OCI-LY7 (cell line): ENCODE measurements at regions of chr7 and their contacts with region 1.

Region 1: DNA sequence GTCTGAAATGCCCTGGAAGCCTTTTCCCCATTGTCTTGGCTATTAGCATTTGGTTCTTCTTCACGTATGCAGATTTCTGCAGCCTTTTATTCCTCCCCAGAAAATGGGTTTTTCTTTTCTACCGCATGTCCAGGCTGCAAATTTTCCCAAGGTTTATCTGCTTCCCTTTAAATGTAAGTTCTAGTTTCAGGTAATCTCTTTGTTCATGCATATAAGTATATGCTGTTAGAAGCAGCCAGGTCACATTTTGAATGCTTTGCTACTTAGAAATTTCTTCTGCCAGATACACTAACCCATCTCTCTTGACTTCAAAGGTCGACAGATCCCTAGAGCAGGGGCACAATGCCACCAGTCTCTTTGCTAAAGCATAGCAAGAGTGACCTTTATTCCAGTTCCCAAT is 12.3 kb downstream of the THAP5 start:
- DNase-seq: no peak
- H3K4me3 ChIP-seq: no peak overlapping the region
- H3K27ac ChIP-seq: no peak overlapping the region
- H3K4me1 ChIP-seq: peaks cover 8% of the 10 kb centered on the region
- CTCF ChIP-seq: no peak

Region 2: DNA sequence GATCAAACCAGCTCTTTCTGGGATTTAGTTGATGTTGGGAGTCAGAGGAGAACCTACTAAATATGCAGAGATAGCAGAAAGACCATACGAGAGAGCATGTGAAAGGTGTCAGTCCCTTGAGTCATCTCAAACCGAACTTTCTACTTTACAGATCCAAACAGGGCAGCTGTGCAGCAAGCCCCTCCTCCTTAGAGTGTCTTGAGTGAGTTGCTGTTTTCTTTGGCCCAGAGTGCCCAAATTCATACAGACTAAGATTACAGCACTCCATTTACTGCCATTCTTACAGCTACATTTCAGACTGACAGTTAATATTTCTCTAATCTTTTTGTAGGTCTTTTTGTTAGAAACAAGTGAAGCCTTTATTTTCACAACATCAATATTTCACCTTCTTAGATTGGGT is 154.3 kb before region 1 on chr7:
- CTCF ChIA-PET with region 1: no interaction called
- POLR2A ChIA-PET with region 1: no interaction called
- intact Hi-C with region 1: no loop called
- DNase-seq: no peak
- H3K4me3 ChIP-seq: no peak overlapping the region
- H3K27ac ChIP-seq: no peak overlapping the region
- H3K4me1 ChIP-seq: no peaks in the 10 kb centered on the region
- CTCF ChIP-seq: no peak

Region 3: DNA sequence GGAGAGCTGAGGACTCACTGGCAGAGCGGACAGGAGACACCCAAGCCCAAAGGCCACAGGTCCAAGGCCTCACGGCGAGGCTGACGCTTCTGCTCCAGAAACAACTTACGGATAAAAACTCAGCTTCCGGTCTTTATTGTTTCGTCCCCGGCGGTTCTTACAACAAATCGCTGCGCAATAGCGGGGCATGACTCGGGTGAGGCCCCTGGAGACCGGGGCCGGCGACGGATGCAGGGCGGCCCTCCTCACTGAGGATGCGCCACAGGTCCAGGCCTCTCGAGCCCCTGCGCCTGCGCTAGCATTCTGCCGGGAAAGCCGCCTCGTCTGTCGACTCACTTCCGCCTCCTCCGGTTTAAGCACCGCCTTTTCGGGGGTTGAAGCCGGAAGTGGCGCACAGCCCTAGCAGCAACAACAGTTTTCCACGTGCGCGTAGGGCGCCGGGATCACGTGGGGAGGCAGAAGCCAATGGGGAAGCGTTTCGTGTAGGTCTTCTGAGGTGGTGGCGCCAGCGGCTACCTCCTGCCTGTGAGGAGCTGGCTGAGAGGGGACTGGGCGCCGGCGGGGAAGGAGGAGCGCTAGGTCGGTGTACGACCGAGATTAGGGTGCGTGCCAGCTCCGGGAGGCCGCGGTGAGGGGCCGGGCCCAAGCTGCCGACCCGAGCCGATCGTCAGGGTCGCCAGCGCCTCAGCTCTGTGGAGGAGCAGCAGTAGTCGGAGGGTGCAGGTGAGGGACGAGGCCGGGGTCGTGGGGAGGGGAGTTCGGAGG is 12.4 kb after region 1 on chr7 and contains the starts of genes DNAJB9 and THAP5:
- CTCF ChIA-PET with region 1: interaction called, 5 read pairs
- POLR2A ChIA-PET with region 1: interaction called, 13 read pairs
- intact Hi-C with region 1: no loop called
- DNase-seq: peak; percentile 99
- H3K4me3 ChIP-seq: peak within 1 kb of the TSS; percentile 81
- H3K27ac ChIP-seq: peak within 1 kb of the TSS; percentile 89
- H3K4me1 ChIP-seq: peaks cover 26% of the 10 kb centered on the region
- CTCF ChIP-seq: no peak
- total RNA-seq, gene DNAJB9: 20.3 and 22.4 TPM in 2 replicates
- total RNA-seq, gene THAP5: 23.5 and 24.2 TPM in 2 replicates